ENCODE measurements at regions of chr3 and their contacts with region 1.

Region 1: DNA sequence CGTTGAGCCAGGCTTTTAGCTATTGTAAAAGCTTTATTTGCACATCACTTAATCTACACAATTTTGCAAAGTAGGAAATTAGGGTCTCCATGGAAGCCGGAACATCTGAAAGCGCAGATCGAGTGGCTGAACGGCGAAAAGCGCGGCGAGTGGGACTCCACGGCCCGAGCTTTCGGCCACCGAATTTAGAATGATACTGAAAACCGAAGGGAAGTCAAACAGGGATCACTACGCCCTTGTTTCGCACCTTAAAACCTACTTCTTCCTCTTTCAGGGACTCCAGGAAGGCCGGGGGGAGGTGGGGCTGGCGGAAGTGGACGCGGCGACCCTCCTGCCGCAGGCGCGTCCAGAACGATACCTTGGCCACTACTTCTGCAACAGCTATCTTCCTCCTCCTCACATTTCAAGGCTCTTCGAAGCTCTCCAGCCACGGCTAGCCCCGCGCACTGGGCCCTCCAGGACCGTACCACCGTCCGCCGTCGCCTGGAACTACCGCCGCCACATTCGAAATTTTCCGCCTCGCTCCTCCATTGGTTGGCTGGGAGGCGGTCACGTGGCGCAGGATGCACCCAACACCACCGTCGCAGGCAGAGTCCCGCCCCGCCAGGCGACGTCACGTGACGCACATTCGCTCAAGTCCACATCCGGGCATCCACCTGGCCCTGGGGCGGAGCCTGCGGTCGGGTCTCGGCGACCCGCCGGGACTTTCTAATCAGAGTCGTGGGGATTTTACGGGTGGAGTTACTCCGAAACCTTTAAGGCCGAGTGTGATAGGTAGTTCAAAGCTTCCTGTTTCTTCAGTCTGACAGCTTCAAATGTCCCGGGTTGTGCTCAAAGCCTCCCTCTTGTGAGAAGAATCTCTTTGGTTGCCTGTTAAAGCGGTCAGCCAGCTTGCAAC is at the start of gene SGO1:
- DNase-seq: peak; percentile 100
- H3K4me3 ChIP-seq: peak within 1 kb of the TSS; percentile 68 to 97 (median 82)
- H3K27ac ChIP-seq: peak within 1 kb of the TSS; percentile 90 to 97 (median 95)
- H3K4me1 ChIP-seq: peaks cover 11 to 34% (median 23%) of the 10 kb centered on the region in 6 donors
- H3K27me3 ChIP-seq: no peaks in the 10 kb centered on the region
- CTCF ChIP-seq: peak in 3 of 11 experiments; percentile 16 to 38 (median 24)
- POLR2A ChIP-seq: peak in 1 of 3 donors; percentile 72
- total RNA-seq, gene SGO1: 1.9 to 5.7 (median 3.2) TPM

Region 2: DNA sequence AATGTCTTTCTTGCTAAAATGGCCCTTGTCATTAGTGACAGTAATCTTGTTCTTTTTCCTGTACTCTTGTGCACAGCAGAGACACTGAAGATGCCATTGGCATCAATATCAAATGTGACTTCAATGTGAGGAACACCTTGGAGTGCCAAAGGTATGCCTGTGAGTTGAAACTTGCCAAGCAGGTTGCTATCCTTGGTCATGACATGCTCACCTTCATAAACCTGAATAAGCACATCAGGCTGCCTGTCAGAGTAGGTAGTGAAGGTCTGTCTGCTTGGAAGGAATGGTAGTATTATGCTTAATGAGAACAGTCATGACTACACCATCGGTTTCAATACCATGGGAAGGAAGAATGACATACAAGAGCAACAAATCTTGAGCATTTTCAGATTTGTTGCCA is 245.3 kb before region 1 on chr3:
- intact Hi-C with region 1: loop called (anchors 5 kb)
- DNase-seq: no peak
- H3K4me3 ChIP-seq: no peak overlapping the region
- H3K27ac ChIP-seq: no peak overlapping the region
- H3K4me1 ChIP-seq: peaks cover 0 to 5% (median 2%) of the 10 kb centered on the region in 6 donors
- H3K27me3 ChIP-seq: no peaks in the 10 kb centered on the region
- CTCF ChIP-seq: no peak
- POLR2A ChIP-seq: no peak

Region 3: DNA sequence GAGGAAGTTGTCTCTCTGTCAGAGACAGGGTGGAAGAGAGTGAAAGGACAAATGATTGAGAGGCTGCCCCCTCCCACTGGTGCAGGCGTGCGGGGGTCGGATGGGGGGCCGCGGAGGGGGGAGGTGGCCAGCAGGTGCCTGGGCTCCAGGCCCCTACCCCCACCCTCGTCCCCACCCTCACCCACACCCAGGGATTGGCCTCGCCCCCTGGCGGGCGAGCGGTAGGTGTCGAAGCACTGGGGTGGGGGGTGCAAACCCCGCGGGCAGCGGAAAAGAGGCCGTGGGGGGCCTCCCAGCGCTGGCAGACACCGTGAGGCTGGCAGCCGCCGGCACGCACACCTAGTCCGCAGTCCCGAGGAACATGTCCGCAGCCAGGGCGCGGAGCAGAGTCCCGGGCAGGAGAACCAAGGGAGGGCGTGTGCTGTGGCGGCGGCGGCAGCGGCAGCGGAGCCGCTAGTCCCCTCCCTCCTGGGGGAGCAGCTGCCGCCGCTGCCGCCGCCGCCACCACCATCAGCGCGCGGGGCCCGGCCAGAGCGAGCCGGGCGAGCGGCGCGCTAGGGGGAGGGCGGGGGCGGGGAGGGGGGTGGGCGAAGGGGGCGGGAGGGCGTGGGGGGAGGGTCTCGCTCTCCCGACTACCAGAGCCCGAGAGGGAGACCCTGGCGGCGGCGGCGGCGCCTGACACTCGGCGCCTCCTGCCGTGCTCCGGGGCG is 146.0 kb before region 1 on chr3 and contains the start of gene KAT2B:
- intact Hi-C with region 1: loop called (anchors 5 kb)
- DNase-seq: peak; percentile 97
- H3K4me3 ChIP-seq: peak within 1 kb of the TSS; percentile 66 to 93 (median 82)
- H3K27ac ChIP-seq: peak within 1 kb of the TSS; percentile 74 to 99 (median 98)
- H3K4me1 ChIP-seq: peaks cover 36 to 59% (median 45%) of the 10 kb centered on the region in 6 donors
- H3K27me3 ChIP-seq: no peaks in the 10 kb centered on the region
- CTCF ChIP-seq: peak; percentile 55 to 90 (median 84)
- POLR2A ChIP-seq: peak in 2 of 3 donors; percentile 45 to 58
- total RNA-seq, gene KAT2B: 39.1 to 64.3 (median 58.0) TPM